ENCODE measurements at regions of chr20 and their contacts with region 1.

Region 1: DNA sequence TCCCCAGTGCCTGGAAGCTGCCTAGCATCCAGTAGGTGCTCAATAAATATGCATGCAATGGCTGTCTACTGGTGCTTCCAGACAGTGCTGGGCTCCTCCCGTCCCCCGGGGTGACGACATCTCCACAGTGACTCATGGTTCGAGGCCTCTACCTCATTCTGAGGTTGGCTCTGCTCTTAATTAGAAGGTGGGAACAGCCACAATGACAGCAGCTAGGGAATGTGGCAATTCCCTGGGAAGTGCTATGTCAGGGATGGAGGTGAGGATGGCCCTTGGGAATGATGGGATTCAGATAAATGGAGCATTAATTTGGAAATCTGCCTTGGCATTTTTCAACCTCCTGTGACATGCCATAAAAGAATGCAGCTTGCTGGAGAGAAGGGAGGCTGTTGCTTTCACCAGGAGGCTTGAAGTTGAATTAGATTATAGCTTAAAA is 43.5 kb upstream of the NFATC2 start:
- DNase-seq: peak; percentile 63
- ATAC-seq: peak; percentile 81
- H3K4me3 ChIP-seq: no peak overlapping the region
- H3K27ac ChIP-seq: no peak overlapping the region
- H3K4me1 ChIP-seq: peaks cover 17 to 49% of the 10 kb centered on the region in 2 experiments
- H3K27me3 ChIP-seq: no peaks in the 10 kb centered on the region
- CTCF ChIP-seq: no peak
- POLR2A ChIP-seq: no peak
- RAD21 ChIP-seq: no peak

Region 2: DNA sequence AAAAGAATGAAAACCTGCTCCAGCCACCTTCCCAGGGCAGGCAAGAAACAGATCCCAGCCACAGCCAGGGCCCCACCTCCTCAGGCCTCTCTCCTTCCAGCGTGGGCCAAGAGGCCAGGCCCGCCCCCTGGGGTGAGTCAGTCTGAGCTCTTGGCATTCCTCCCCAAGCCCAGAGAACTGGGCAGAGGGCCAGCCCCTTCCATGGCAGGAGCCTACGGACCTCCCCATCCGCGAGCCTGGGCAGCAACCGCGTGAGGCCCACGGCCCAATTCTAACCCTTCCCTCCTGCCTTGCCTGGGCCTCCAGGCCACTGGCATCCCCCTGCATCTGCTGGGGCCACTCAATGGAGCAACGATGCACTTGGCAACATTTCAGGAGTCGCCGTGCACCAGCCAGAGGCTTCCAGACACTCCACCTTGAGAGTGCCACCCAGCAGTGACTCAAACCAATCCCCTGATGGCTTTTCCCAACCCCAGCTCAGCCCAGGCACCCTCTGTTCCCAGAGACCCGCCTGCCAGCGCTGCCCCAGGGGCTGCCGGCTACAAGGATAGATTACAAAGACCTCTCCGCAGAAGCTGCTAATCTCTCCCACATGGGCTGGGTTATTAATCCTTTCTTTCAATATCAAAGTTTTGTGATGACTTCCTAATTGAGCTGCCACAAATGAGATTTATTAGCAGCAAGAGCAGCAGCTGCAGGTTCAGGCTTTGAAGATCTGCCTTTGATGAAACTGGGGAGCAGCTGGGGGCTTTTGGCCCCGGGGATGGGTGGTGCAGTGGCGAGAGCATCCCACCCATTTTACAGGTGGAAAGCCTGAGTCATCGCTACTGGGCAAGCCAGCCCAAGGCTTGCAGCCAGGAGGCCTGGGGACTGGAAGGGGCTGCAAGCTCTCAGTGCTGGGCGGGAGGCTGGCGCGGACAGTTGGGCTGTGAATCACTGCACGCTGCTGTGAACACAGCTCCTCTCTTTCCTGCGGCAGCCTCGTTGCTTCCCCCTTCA is 129.2 kb before region 1 on chr20:
- CTCF ChIA-PET with region 1: no interaction called
- POLR2A ChIA-PET with region 1: no interaction called
- RAD21 ChIA-PET with region 1: no interaction called
- intact Hi-C with region 1: loop called (anchors 5 kb)
- DNase-seq: peak; percentile 88
- ATAC-seq: peak; percentile 91
- H3K4me3 ChIP-seq: peak overlapping the region; percentile 46 to 62
- H3K27ac ChIP-seq: peak overlapping the region; percentile 66
- H3K4me1 ChIP-seq: peaks cover 18 to 23% of the 10 kb centered on the region in 2 experiments
- H3K27me3 ChIP-seq: no peaks in the 10 kb centered on the region
- CTCF ChIP-seq: no peak
- POLR2A ChIP-seq: no peak
- RAD21 ChIP-seq: no peak

Region 3: GRCh38 chr20:51650685-51651134 is 64.7 kb after region 1 on chr20:
- CTCF ChIA-PET with region 1: no interaction called
- POLR2A ChIA-PET with region 1: no interaction called
- RAD21 ChIA-PET with region 1: no interaction called
- intact Hi-C with region 1: no loop called
- DNase-seq: peak; percentile 15
- ATAC-seq: peak; percentile 49; the same call in 1 of the 2 replicates
- H3K4me3 ChIP-seq: no peak overlapping the region
- H3K27ac ChIP-seq: no peak overlapping the region
- H3K4me1 ChIP-seq: peaks cover 8 to 23% of the 10 kb centered on the region in 2 experiments; a peak in 3 of 4 replicates
- H3K27me3 ChIP-seq: no peaks in the 10 kb centered on the region
- CTCF ChIP-seq: no peak
- POLR2A ChIP-seq: no peak
- RAD21 ChIP-seq: no peak

Region 4: GRCh38 chr20:51750037-51750763 is 164.2 kb after region 1 on chr20:
- CTCF ChIA-PET with region 1: no interaction called
- POLR2A ChIA-PET with region 1: no interaction called
- RAD21 ChIA-PET with region 1: no interaction called
- intact Hi-C with region 1: no loop called
- DNase-seq: peak; percentile 96
- ATAC-seq: peak; percentile 86
- H3K4me3 ChIP-seq: peak overlapping the region; percentile 22 to 30
- H3K27ac ChIP-seq: peak overlapping the region; percentile 87
- H3K4me1 ChIP-seq: peaks cover 59 to 80% of the 10 kb centered on the region in 2 experiments
- H3K27me3 ChIP-seq: no peaks in the 10 kb centered on the region
- CTCF ChIP-seq: no peak
- POLR2A ChIP-seq: no peak
- RAD21 ChIP-seq: no peak

Measured in HCT116 (cell line).